ENCODE measurements at regions of chrX and their contacts with region 1.

Region 1: DNA sequence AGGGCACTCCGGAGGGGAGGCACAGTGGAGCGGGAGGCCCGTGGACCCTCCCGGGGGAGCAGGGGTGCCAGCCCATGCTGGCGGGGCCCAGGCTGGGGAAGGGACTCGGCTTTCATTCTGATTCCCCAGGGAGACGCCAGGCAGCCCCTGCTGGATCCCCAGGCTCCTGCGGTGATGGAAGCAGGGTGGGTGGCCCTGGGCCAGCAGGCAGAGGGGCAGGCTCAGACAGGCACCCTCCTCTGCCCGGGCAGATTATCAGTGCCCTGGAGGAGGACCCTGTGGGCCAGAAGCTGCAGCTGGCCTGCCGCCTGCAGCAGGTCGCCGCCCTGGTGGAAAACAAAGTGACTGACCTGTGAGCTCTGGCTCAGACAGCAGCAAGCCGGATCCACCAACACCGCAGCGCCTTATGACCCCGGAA is 2.1 kb upstream of the SRPK3 start:
- DNase-seq: no peak

Region 2: DNA sequence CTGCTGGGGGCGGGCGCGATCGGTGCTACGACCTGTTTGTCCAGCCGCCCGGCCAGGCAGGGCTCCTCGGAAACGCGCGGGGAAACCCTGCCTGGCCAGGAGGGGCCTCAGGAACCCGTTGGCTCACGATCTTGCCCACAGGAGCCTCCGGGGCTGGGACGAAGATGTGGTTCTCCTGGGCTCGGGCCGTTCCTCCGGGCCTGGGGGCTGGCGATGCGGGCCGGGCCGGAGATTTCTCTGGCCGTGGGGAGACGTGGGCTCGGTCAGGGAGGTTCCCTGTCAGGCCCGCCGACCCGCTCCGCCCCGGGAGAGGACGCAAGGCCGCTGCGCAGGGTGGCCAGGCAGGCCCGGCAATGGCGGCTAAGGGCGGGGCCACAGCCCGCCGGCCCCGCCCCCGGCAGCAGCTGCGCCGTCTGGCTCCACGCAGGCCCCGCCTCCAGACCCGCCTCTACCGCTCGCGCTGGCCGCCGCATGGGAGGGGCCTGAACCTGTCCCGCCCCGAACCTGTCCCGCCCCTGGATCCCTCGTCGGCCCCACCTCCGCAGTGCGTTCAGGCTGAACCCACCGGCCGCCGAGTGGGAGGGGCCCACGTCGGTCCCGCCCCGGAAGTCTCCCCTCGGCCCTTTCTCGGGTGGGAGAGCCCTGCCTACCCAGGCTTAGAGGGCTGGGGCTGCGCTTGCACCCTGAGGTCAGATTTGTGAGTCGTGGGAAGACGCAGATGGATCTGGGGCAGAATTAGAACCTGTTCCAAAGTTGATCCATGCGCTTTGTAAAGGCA is 737.4 kb after region 1 on chrX and contains the start of gene FAM3A:
- intact Hi-C with region 1: loop called in 1 of 2 experiments (anchors 5 kb)
- DNase-seq: peak; percentile 98
- total RNA-seq, gene FAM3A: 26.1 to 28.6 TPM